ENCODE measurements at regions of chr5 and their contacts with region 1.

Region 1: DNA sequence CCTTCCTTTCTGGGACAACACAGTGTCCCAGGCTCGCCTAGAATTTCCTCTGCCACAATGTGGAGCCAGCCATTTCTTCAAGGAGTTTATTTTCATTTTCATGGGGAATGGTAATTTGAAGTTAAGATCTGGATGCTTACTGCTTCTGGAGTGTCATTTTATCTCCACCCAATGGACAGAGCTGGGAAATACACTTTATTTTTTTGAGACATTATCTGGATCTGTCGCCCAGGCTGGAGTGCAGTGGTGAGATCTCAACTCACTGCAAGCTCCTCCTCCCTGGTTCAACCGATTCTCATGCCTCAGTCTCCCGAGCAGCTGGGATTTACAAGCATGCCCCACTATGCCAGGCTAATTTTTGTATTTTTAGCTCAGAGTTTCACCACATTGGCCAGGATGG is 12.7 kb upstream of the THG1L start:
- DNase-seq: no peak
- H3K4me3 ChIP-seq: no peak overlapping the region
- H3K27ac ChIP-seq: no peak overlapping the region
- H3K4me1 ChIP-seq: no peaks in the 10 kb centered on the region
- H3K27me3 ChIP-seq: no peaks in the 10 kb centered on the region
- CTCF ChIP-seq: peak in 3 of 4 experiments; percentile 35 to 61 (median 60)
- POLR2A ChIP-seq: no peak

Region 2: GRCh38 chr5:157328277-157328912 is 390.1 kb before region 1 on chr5:
- intact Hi-C with region 1: loop called (anchors 5 kb)
- DNase-seq: peak; percentile 64
- H3K4me3 ChIP-seq: no peak overlapping the region
- H3K27ac ChIP-seq: no peak overlapping the region
- H3K4me1 ChIP-seq: no peaks in the 10 kb centered on the region
- H3K27me3 ChIP-seq: no peaks in the 10 kb centered on the region
- CTCF ChIP-seq: peak; percentile 81 to 90 (median 85)
- POLR2A ChIP-seq: no peak